ENCODE measurements at regions of chr4 and their contacts with region 1.

Region 1: GRCh38 chr4:147960971-147961370 is 229.1 kb downstream of the ARHGAP10 start:
- DNase-seq: no peak
- H3K4me3 ChIP-seq: no peak overlapping the region
- H3K27ac ChIP-seq: no peak overlapping the region
- H3K4me1 ChIP-seq: no peaks in the 10 kb centered on the region
- H3K27me3 ChIP-seq: no peaks in the 10 kb centered on the region
- CTCF ChIP-seq: no peak
- POLR2A ChIP-seq: no peak

Region 2: DNA sequence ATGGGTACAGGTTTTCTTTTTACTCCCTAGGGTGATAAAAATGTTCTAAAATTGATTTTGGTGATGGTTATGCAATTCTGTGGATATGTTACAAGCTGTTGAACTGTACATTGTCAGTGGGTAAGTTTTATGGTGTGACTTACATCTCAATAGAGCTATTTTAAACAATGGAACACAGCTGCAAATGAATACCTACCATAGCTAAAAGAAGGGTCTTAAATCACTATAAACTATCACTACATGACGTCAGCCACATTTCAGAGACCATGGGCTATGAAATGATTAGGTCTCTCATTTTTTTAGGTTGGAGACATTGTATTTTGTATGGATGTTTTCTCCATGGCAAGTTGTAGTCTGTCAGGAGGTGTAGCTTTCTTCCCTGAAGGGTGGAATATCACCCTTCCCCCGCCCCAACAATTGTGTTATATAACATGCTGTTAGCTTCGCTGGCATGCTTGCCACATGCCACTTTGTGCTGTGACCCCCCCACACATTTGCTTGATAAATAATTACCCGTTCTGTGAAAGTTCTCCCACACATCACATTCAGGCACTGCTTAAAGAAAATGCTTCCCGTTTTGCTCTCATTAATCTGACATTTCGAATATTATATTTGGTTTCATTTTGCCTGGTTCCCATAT is 69.4 kb before region 1 on chr4:
- CTCF ChIA-PET with region 1: no interaction called
- POLR2A ChIA-PET with region 1: no interaction called
- dilution Hi-C with region 1: no loop called
- intact Hi-C with region 1: no loop called
- DNase-seq: no peak
- H3K4me3 ChIP-seq: no peak overlapping the region
- H3K27ac ChIP-seq: no peak overlapping the region
- H3K4me1 ChIP-seq: no peaks in the 10 kb centered on the region
- H3K27me3 ChIP-seq: no peaks in the 10 kb centered on the region
- CTCF ChIP-seq: no peak
- POLR2A ChIP-seq: no peak

Region 3: GRCh38 chr4:147975933-147976928 is 15.3 kb after region 1 on chr4:
- CTCF ChIA-PET with region 1: no interaction called
- POLR2A ChIA-PET with region 1: no interaction called
- dilution Hi-C with region 1: no loop called
- intact Hi-C with region 1: loop called (anchors 2 kb)
- DNase-seq: peak; percentile 56
- H3K4me3 ChIP-seq: no peak overlapping the region
- H3K27ac ChIP-seq: no peak overlapping the region
- H3K4me1 ChIP-seq: no peaks in the 10 kb centered on the region
- H3K27me3 ChIP-seq: no peaks in the 10 kb centered on the region
- CTCF ChIP-seq: no peak
- POLR2A ChIP-seq: no peak